ENCODE measurements at regions of chr20 and their contacts with region 1.

Region 1: DNA sequence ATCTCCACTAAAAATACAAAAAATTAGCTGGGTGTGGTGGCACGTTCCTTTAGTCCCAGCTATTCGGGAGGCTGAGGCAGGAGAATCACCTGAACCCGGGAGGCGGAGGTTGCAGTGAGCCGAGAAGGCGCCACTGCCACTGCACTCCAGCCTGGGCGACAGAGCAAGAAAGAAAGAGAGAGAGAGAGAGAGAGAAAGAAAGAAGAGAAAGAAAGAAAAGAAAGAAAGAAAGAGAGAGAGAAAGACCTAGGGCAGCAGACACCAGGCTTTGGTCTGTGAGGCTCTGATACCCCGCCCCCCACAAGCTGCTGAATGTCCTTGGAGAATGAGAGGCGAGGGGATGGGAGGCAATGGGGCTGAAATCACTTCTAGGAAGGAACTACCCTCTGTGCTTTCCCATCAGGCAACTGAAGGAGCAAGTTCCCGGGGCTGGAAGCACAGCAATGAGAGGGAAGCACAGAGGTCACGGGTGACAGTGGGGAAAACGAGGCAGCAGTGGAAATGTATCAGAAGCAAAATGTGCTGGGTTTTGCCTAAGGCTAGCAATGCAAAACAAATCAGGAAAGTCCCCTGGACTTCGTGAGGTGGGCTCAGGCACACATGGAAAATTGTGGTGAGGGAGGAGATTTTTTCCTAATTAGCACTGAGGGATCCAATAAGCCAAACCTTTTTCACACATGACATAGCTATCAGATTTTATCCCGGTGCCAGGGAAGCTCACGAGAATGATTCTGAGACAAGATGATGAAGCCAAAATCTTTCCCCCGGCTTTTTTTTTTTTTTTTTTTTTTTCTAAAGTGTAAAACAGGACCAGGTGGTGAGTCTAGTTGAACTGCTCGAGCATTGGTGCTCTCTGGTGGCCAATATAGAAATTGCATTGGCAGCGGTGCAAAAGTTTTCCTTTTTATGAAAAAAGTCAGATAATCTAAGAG is 16.9 kb upstream of the ARFGEF2 start:
- DNase-seq: peak; percentile 62
- H3K4me3 Mint-ChIP-seq: no peak overlapping the region
- H3K27ac Mint-ChIP-seq: no peak overlapping the region
- H3K4me1 Mint-ChIP-seq: peaks cover 4% of the 10 kb centered on the region
- H3K27me3 Mint-ChIP-seq: peaks cover 50% of the 10 kb centered on the region
- CTCF ChIP-seq: peak; percentile 68

Region 2: GRCh38 chr20:48635433-48636310 is 269.0 kb before region 1 on chr20:
- CTCF ChIA-PET with region 1: interaction called, 5 read pairs
- POLR2A ChIA-PET with region 1: no interaction called
- intact Hi-C with region 1: loop called (anchors 5 kb)
- DNase-seq: peak; percentile 51
- H3K4me3 Mint-ChIP-seq: no peak overlapping the region
- H3K27ac Mint-ChIP-seq: no peak overlapping the region
- H3K4me1 Mint-ChIP-seq: no peaks in the 10 kb centered on the region
- H3K27me3 Mint-ChIP-seq: peaks cover 31% of the 10 kb centered on the region
- CTCF ChIP-seq: peak; percentile 83

Region 3: DNA sequence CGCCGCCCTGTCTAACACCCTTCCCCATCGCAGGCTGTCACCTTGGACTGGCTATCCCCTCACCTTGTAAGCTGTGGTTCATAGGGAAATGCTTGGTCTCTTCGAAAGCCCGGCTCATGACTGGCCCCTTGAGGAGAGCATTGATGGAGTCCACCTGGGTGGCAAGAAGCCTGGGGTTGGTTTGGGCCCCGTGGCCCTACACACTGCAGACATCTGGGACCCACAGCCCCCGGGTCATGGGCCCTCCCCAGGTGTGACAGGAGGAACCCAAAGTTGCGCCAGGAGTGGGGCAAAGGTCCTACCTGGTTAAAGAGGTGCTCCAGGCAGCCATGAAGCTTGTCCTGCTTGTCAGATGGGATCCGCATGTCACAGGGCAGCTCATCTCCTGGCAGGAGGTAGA is 262.5 kb before region 1 on chr20:
- CTCF ChIA-PET with region 1: interaction called, 13 read pairs
- POLR2A ChIA-PET with region 1: no interaction called
- intact Hi-C with region 1: loop called (anchors 5 kb)
- DNase-seq: no peak
- H3K4me3 Mint-ChIP-seq: no peak overlapping the region
- H3K27ac Mint-ChIP-seq: no peak overlapping the region
- H3K4me1 Mint-ChIP-seq: no peaks in the 10 kb centered on the region
- H3K27me3 Mint-ChIP-seq: peaks cover 40% of the 10 kb centered on the region
- CTCF ChIP-seq: no peak

Region 4: GRCh38 chr20:48648550-48648951 is 256.1 kb before region 1 on chr20:
- CTCF ChIA-PET with region 1: interaction called, 365 read pairs
- POLR2A ChIA-PET with region 1: no interaction called
- intact Hi-C with region 1: no loop called
- DNase-seq: no peak
- H3K4me3 Mint-ChIP-seq: no peak overlapping the region
- H3K27ac Mint-ChIP-seq: no peak overlapping the region
- H3K4me1 Mint-ChIP-seq: no peaks in the 10 kb centered on the region
- H3K27me3 Mint-ChIP-seq: peaks cover 55% of the 10 kb centered on the region
- CTCF ChIP-seq: no peak

Region 5: DNA sequence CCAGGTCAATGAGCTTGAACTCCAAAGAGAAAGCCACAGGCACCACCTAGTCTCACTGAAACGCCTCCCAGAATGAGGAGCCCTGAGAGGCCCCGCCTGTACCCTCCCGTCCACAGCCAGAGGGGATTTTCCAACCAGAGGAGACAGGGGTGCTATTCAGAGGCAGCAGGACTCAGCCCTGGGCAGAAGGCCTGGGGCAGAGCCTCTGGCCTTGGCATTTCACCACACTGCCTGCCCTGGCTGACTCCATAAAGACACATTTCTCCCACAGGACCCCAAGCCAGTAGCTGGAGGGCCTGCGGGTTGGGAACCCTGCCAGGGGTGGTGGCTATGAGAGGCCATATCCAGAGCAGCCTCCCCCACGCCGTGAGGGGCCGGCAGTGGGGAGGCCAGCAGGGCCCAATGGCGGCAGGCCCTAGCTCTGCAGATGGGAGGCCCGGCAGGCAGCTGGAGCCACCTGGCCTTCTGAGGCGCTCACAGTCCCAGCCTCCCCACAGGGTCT is 236.1 kb before region 1 on chr20:
- CTCF ChIA-PET with region 1: interaction called, 365 read pairs
- POLR2A ChIA-PET with region 1: interaction called, 3 read pairs
- intact Hi-C with region 1: no loop called
- DNase-seq: no peak
- H3K4me3 Mint-ChIP-seq: no peak overlapping the region
- H3K27ac Mint-ChIP-seq: no peak overlapping the region
- H3K4me1 Mint-ChIP-seq: no peaks in the 10 kb centered on the region
- H3K27me3 Mint-ChIP-seq: peaks cover 49% of the 10 kb centered on the region
- CTCF ChIP-seq: no peak

Region 6: GRCh38 chr20:48695207-48695635 is 209.4 kb before region 1 on chr20:
- CTCF ChIA-PET with region 1: interaction called, 10 read pairs
- POLR2A ChIA-PET with region 1: no interaction called
- intact Hi-C with region 1: no loop called
- DNase-seq: no peak
- H3K4me3 Mint-ChIP-seq: no peak overlapping the region
- H3K27ac Mint-ChIP-seq: no peak overlapping the region
- H3K4me1 Mint-ChIP-seq: peaks cover 17% of the 10 kb centered on the region
- H3K27me3 Mint-ChIP-seq: no peaks in the 10 kb centered on the region
- CTCF ChIP-seq: no peak

Region 7: GRCh38 chr20:48921151-48921898 is 16.7 kb after region 1 on chr20 and contains the start of gene ARFGEF2:
- CTCF ChIA-PET with region 1: interaction called, 14 read pairs
- POLR2A ChIA-PET with region 1: interaction called, 14 read pairs
- intact Hi-C with region 1: no loop called
- DNase-seq: peak; percentile 90
- H3K4me3 Mint-ChIP-seq: peak within 1 kb of the TSS; percentile 82
- H3K27ac Mint-ChIP-seq: peak within 1 kb of the TSS; percentile 92
- H3K4me1 Mint-ChIP-seq: peaks cover 24% of the 10 kb centered on the region
- H3K27me3 Mint-ChIP-seq: no peaks in the 10 kb centered on the region
- CTCF ChIP-seq: no peak
- total RNA-seq, gene ARFGEF2: 30.3 and 33.5 TPM in 2 replicates

Measured in MCF 10A (cell line).